IMR-90 (cell line): ENCODE measurements at regions of chr3 and their contacts with region 1.

Region 1: DNA sequence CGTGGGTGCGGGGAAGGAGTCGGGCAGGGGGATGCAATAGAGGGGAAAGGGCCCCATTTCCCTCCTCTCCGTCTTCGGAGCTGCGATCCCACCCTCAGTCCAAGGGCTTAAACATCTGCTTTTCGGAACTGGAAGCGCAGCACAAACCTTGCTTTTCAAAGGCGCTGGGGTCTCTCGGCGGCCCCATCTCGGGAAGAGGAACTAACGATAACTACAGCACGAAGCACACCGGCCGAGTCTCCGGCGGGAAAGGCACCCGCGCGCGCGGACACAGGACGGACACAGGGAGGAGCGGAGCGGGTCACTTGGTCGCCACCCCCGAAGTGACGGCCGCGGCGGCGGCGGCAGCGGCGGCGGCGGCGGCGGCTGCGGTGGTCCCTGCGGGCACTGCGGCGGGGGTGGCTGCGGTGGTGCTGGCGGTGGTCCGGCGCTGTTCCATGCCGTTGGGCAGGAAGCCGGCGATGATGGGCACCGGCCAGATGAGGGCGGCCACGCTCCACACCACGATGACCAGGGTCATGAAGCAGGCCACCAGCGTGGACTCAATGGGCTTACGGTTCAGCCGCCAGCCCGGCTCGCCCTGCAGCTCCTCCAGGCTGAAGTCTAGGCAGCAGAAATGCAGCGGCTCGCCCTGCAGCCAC is 1.1 kb downstream of the TMEM158 start:
- DNase-seq: peak; percentile 78
- ATAC-seq: peak; percentile 64
- H3K4me3 ChIP-seq: peak overlapping the region; percentile 72
- H3K27ac ChIP-seq: peak overlapping the region; percentile 89
- H3K4me1 ChIP-seq: peaks cover 10% of the 10 kb centered on the region
- H3K27me3 ChIP-seq: no peaks in the 10 kb centered on the region
- CTCF ChIP-seq: peak; percentile 73
- POLR2A ChIP-seq: peak; percentile 41; the same call in 1 of the 2 replicates
- RAD21 ChIP-seq: peak; percentile 83

Region 2: DNA sequence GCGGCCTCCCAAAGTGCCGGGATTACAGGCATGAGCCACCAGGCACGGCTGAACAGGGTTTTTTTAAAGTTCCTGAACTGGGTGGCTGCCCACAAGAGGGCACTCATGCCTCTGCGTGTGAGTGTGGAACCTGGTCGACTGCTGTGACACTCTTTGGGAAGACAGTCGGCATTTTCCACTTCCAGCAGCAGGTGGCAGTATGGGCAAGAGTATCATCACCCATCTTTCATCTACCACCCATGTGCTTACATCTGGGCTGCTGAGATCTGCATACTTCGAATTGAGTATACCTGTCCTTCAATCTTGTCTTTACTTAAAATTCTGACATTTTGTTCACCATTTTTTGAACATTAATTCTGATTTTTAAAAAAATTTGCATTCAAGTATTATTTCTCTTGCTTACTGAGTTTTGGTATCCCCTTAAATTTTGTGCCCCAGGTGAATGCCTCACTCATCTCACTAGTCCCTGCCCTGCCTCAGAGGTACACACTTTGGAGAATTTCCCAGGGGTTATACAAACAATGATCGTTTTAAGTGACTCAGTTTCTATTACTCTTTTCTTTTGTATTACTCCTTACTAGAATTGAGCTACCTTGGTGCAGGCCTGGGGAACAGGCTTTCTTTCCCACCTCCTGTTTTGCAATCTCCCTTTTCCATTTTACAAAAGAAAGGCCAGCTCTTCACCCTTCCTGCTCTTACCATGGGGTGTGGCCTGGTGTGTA is 187.0 kb before region 1 on chr3:
- CTCF ChIA-PET with region 1: interaction called, 6 read pairs
- POLR2A ChIA-PET with region 1: interaction called, 10 read pairs
- dilution Hi-C with region 1: no loop called
- in situ Hi-C with region 1: loop called (anchors 5 kb)
- intact Hi-C with region 1: loop called (anchors 1 kb)
- DNase-seq: peak; percentile 93
- ATAC-seq: peak; percentile 70
- H3K4me3 ChIP-seq: no peak overlapping the region
- H3K27ac ChIP-seq: no peak overlapping the region
- H3K4me1 ChIP-seq: peaks cover 20% of the 10 kb centered on the region
- H3K27me3 ChIP-seq: no peaks in the 10 kb centered on the region
- CTCF ChIP-seq: peak; percentile 98
- POLR2A ChIP-seq: 0 out of 2 replicates have a peak, but pooled peaks have one; percentile 44
- RAD21 ChIP-seq: peak; percentile 98

Region 3: DNA sequence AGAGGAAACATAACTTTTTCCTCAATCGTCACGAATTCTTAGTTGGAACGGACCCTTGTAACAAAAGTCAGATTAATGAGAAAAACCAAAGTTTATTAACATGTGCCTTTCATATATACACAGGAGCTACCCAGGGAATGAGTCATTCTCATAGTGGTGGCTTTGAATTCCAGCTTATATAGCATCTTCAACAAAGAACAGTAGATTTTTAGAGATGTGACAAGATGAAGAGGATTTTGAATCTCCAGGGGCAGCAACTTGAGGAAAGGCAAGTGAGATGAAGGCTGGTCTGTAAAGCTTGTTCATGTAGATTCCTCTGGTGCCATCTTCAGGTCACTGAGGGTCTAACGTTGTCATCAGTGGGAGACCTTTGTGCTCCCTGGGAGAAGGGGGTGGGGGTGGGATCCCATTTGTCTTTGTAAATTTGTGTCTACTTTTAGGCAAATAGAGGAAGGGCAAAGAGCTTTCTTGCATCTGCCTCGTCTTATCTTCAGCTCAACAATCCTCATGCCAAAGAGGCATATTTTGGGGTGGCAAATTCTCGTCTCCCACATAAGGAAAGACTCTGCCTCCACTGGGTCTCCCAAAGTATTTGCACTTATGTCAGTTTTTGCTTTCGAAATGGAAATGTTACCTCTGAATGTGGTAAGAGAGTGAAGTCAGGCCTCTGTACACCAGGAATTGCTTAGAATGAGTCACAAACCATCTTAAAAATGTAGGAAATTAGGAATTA is 169.4 kb before region 1 on chr3:
- CTCF ChIA-PET with region 1: no interaction called
- POLR2A ChIA-PET with region 1: interaction called, 3 read pairs
- dilution Hi-C with region 1: no loop called
- in situ Hi-C with region 1: no loop called
- intact Hi-C with region 1: loop called (anchors 2 kb)
- DNase-seq: peak; percentile 96
- ATAC-seq: peak; percentile 68
- H3K4me3 ChIP-seq: peak overlapping the region; percentile 44; the same call in 1 of the 2 replicates
- H3K27ac ChIP-seq: peak overlapping the region; percentile 98
- H3K4me1 ChIP-seq: peaks cover 21% of the 10 kb centered on the region
- H3K27me3 ChIP-seq: no peaks in the 10 kb centered on the region
- CTCF ChIP-seq: peak; percentile 20; the same call in 1 of the 2 replicates
- POLR2A ChIP-seq: no peak
- RAD21 ChIP-seq: no peak

Region 4: DNA sequence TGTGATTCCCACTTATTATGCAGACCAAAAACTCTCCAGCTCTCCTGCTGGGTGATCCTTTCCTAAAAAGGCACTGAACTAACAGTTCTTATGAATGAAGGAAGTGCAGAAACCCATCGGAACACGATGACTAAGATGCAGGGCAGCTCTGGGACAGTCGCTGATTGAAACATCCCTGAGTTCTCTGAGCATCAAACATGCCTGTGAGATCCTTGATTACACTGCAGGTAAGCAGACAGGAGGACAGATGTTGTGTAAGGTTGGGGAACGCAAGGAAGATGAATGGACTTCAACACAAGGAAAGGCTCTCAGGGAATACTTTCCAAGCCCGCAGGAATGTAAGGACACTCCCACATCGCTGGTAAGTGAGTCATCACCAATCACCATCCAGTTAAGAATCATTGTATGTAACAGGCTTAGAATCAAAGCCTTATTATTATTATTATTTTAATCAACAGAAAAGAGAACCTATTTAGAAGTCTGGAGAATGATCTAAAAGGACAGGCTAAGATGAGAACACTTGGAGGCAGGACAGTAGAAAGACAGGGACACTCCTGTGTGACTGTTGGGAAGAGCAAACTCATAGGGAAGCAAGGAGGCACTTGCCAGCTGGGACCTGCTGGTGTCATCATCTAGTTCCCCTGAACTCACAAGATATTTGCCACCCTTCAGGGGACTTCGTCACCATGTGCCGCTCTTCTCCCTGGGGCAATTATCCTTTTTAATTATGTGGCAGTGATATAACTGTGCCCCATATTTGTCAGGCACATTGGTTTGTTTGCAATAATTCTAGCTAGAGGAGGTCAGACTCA is 24.9 kb before region 1 on chr3:
- CTCF ChIA-PET with region 1: no interaction called
- POLR2A ChIA-PET with region 1: no interaction called
- dilution Hi-C with region 1: no loop called
- in situ Hi-C with region 1: no loop called
- intact Hi-C with region 1: no loop called
- DNase-seq: peak; percentile 92
- ATAC-seq: peak; percentile 84
- H3K4me3 ChIP-seq: no peak overlapping the region
- H3K27ac ChIP-seq: peak overlapping the region; percentile 59
- H3K4me1 ChIP-seq: peaks cover 20% of the 10 kb centered on the region
- H3K27me3 ChIP-seq: no peaks in the 10 kb centered on the region
- CTCF ChIP-seq: no peak
- POLR2A ChIP-seq: no peak
- RAD21 ChIP-seq: no peak

Region 5: DNA sequence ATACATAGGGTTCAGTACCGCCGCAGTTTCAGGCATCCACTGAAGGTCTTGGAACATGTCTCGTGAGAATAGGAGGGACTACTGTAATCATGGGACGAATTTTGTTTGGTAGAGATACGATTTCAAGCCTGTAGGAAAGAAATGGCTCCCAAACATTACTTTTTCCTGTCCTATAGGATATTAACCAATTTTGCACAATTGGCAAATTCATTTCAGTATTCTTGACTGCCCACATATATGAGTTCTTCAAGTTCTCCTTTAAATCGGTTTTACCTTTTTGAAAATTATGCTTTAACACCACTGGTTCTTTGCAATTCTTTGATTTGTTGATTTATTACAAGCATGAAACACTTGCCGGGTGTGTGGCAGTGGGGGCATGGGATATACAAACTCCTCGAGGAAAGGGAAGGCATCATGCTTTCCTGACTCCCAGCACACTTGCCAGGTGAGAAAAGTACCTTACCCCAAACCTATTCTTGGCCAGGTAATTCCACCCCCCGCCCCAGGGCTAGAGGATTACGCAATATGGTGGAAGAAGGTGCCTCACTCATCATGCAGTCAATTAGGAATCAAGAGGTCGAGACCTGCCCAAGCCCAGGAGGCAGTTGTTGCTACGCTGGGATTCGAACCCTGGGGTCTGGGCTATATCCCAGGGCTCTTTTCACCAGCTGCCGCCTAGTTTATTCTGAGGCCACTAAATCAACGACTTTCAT is 162.8 kb after region 1 on chr3:
- CTCF ChIA-PET with region 1: no interaction called
- POLR2A ChIA-PET with region 1: no interaction called
- dilution Hi-C with region 1: no loop called
- in situ Hi-C with region 1: no loop called
- intact Hi-C with region 1: loop called (anchors 1 kb)
- DNase-seq: no peak
- ATAC-seq: no peak
- H3K4me3 ChIP-seq: peak overlapping the region; percentile 80
- H3K27ac ChIP-seq: peak overlapping the region; percentile 24
- H3K4me1 ChIP-seq: peaks cover 6% of the 10 kb centered on the region; the same call in 1 of the 2 replicates
- H3K27me3 ChIP-seq: peaks cover 2% of the 10 kb centered on the region; the same call in 1 of the 2 replicates
- CTCF ChIP-seq: no peak
- POLR2A ChIP-seq: no peak
- RAD21 ChIP-seq: no peak

Region 6: GRCh38 chr3:45656575-45657363 is 431.8 kb after region 1 on chr3:
- CTCF ChIA-PET with region 1: no interaction called
- POLR2A ChIA-PET with region 1: no interaction called
- dilution Hi-C with region 1: no loop called
- in situ Hi-C with region 1: no loop called
- intact Hi-C with region 1: loop called (anchors 5 kb)
- DNase-seq: peak; percentile 96
- ATAC-seq: peak; percentile 43
- H3K4me3 ChIP-seq: no peak overlapping the region
- H3K27ac ChIP-seq: no peak overlapping the region
- H3K4me1 ChIP-seq: peaks cover 28% of the 10 kb centered on the region
- H3K27me3 ChIP-seq: no peaks in the 10 kb centered on the region
- CTCF ChIP-seq: peak; percentile 96
- POLR2A ChIP-seq: peak; percentile 65
- RAD21 ChIP-seq: peak; percentile 99